Mammary epithelial cell (primary cell): ENCODE measurements at regions of chr10 and their contacts with region 1.

Region 1: GRCh38 chr10:126904819-126905686 is at the start of gene DOCK1:
- DNase-seq: peak; percentile 70
- H3K4me3 ChIP-seq: peak within 1 kb of the TSS; percentile 65 to 76 (median 75)
- H3K27ac ChIP-seq: peak within 1 kb of the TSS; percentile 56
- H3K4me1 ChIP-seq: peaks cover 41% of the 10 kb centered on the region
- H3K27me3 ChIP-seq: no peaks in the 10 kb centered on the region
- CTCF ChIP-seq: no peak
- total RNA-seq, gene DOCK1: 58.1 to 115 TPM

Region 2: DNA sequence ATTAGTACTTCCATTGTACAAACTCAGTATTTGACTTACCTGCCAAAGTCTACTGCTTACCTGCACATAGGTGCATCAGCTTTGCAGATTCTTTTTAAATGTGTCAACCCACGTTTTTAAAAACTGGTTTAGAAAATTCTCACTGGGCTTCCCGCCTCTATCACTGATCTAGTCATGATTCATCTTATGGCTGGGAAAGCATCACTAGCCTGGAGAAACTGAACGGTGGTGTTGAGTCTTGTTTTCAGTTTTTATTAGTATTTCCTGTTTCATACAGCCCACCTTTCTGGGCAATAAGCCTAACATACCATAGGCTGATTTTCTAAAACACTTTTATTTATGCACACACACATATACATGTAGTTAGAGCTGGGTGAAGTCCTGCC is 19.9 kb after region 1 on chr10:
- CTCF ChIA-PET with region 1: no interaction called
- dilution Hi-C with region 1: no loop called
- in situ Hi-C with region 1: no loop called
- intact Hi-C with region 1: loop called (anchors 2 kb)
- DNase-seq: peak; percentile 90
- H3K4me3 ChIP-seq: no peak overlapping the region
- H3K27ac ChIP-seq: peak overlapping the region; percentile 84
- H3K4me1 ChIP-seq: peaks cover 24% of the 10 kb centered on the region
- H3K27me3 ChIP-seq: no peaks in the 10 kb centered on the region
- CTCF ChIP-seq: no peak

Region 3: GRCh38 chr10:126969310-126969709 is 64.3 kb after region 1 on chr10:
- CTCF ChIA-PET with region 1: no interaction called
- dilution Hi-C with region 1: loop called (anchors 5 kb)
- in situ Hi-C with region 1: no loop called
- intact Hi-C with region 1: loop called (anchors 1 kb)
- DNase-seq: peak; percentile 31
- H3K4me3 ChIP-seq: no peak overlapping the region
- H3K27ac ChIP-seq: no peak overlapping the region
- H3K4me1 ChIP-seq: peaks cover 12% of the 10 kb centered on the region
- H3K27me3 ChIP-seq: no peaks in the 10 kb centered on the region
- CTCF ChIP-seq: peak; percentile 31 to 46

Region 4: DNA sequence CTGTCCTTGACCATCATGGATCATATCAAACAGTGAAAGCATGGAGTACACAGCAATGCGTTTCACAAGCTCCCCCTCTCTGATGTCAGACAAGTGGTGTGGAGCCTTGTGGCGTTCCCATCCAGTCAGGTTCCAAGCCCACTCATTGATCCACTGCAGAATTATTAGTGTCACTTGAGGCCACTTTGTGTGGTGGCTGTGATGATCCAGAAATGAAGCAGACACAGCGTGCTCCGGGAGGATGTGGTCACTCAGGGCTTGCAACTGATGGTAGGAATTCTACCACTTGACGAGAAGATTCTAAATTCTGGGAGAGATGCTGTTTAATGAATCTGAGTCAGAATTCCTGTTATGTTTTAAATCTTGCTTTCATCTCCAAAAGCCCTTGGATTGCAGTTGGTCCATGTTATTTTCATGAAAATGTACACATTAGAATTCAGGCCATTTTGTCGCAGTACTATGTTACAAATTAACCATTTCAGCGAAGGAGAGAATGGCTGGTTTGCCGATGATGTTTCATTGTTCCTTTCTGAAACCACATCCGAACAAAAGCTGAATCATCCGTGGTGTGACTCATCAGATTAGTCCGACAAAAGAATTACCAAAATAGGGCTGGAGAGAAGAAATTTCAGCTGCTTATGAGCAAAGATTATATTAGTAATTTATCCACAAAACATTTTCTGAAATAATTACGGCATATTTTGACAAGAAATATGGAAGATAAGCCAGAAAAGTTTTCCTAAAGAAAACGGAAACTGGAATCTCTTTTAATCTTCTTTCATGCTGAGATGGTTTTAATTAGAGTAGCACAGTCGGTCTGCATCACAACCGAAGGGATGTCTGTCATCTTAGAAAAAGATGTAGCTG is 243.2 kb after region 1 on chr10:
- CTCF ChIA-PET with region 1: no interaction called
- dilution Hi-C with region 1: no loop called
- in situ Hi-C with region 1: no loop called
- intact Hi-C with region 1: loop called (anchors 2 kb)
- DNase-seq: peak; percentile 82
- H3K4me3 ChIP-seq: no peak overlapping the region
- H3K27ac ChIP-seq: peak overlapping the region; percentile 90
- H3K4me1 ChIP-seq: peaks cover 63% of the 10 kb centered on the region
- H3K27me3 ChIP-seq: no peaks in the 10 kb centered on the region
- CTCF ChIP-seq: no peak